ENCODE measurements at regions of chr4 and their contacts with region 1.

Region 1: DNA sequence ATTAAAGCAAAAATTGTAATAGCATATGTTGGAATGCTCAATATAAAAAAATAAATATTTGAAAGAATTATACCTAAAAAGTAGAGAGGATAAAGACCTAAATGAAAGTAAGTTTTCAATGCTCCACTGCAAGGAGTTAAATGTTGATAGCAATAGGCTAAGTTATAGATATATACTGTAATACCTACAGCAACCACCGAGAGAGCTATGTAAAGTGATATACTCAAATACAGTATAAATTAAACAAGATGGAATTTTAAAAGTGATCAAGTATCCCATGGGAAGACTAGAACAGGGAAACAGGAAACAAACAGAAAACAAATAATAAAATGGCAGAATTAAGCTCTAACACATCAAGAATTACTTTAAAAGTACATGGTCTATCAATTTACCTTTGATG is 73.9 kb downstream of the CASP3 start:
- DNase-seq: no peak
- H3K4me3 Mint-ChIP-seq: no peak overlapping the region
- H3K27ac Mint-ChIP-seq: peak overlapping the region; percentile 75
- H3K4me1 Mint-ChIP-seq: peaks cover 18% of the 10 kb centered on the region
- H3K27me3 Mint-ChIP-seq: no peaks in the 10 kb centered on the region

Region 2: DNA sequence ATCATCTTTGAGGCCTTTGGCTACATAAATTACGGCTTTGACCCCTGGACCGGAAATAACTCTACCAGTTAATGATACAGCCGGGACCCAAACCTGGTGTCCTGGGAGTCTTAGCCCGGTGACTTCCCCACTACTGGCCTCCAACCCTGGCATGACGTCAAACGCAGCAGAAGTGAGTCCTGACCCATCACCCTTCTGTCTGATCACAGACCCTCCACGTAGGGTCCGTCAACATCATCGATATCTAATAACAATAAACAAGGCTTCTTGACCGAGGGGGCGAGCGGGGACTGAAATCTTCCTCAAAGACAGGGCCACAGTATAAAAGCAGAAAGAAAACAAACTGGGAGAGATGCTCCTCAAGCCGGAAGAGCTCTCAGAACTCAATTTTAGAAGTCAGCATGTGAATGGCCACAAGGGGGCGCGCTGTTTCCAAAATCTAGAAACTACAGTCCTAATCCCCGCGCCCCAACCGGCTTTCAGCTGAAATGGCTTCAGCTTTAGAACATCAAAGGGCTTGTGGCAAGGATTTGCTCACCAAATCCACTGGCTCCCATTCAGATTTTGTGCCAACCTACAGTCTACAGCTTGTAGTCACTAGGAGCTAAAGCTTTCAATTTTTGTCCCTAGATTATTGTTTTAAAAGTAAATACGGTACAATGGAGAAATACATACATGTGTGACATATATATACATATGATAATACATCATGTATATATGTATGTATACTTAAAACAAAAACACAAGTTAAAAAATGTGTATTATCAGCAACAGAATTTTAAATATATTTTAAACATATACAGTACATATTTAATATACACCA is 311.2 kb before region 1 on chr4:
- intact Hi-C with region 1: loop called (anchors 1 kb)
- DNase-seq: peak; percentile 85
- H3K4me3 Mint-ChIP-seq: no peak overlapping the region
- H3K27ac Mint-ChIP-seq: peak overlapping the region; percentile 54
- H3K4me1 Mint-ChIP-seq: peaks cover 54% of the 10 kb centered on the region
- H3K27me3 Mint-ChIP-seq: no peaks in the 10 kb centered on the region

Region 3: GRCh38 chr4:184287697-184288255 is 287.5 kb before region 1 on chr4:
- intact Hi-C with region 1: loop called (anchors 1 kb)
- DNase-seq: no peak
- H3K4me3 Mint-ChIP-seq: no peak overlapping the region
- H3K27ac Mint-ChIP-seq: peak overlapping the region; percentile 13
- H3K4me1 Mint-ChIP-seq: peaks cover 49% of the 10 kb centered on the region
- H3K27me3 Mint-ChIP-seq: no peaks in the 10 kb centered on the region

Region 4: GRCh38 chr4:184514121-184514988 is 61.0 kb before region 1 on chr4:
- intact Hi-C with region 1: loop called (anchors 1 kb)
- DNase-seq: peak; percentile 53
- H3K4me3 Mint-ChIP-seq: peak overlapping the region; percentile 66
- H3K27ac Mint-ChIP-seq: peak overlapping the region; percentile 90
- H3K4me1 Mint-ChIP-seq: peaks cover 51% of the 10 kb centered on the region
- H3K27me3 Mint-ChIP-seq: no peaks in the 10 kb centered on the region

Region 5: GRCh38 chr4:184649026-184649970 is 74.0 kb after region 1 on chr4 and contains the starts of genes CASP3 and PRIMPOL:
- intact Hi-C with region 1: loop called (anchors 2 kb)
- DNase-seq: peak; percentile 96
- H3K4me3 Mint-ChIP-seq: peak within 1 kb of the TSS; percentile 95
- H3K27ac Mint-ChIP-seq: peak within 1 kb of the TSS; percentile 88
- H3K4me1 Mint-ChIP-seq: peaks cover 52% of the 10 kb centered on the region
- H3K27me3 Mint-ChIP-seq: no peaks in the 10 kb centered on the region
- total RNA-seq, gene CASP3: 90.9 and 94.1 TPM in 2 replicates
- total RNA-seq, gene PRIMPOL: 16.2 and 17.6 TPM in 2 replicates

Measured in activated T-helper 2 cell treated with anti-CD3 and anti-CD28 coated beads, Interferon-gamma antibody, Interleukin-2, Interleukin-4, amounts not matched to agents 10 μg/mL and 5 μg/mL and 100 μg/mL, durations not matched to agents 14 hours and 24 hours and 36 hours (primary cell).